A673 (cell line): ENCODE measurements at regions of chr9 and their contacts with region 1.

Region 1: DNA sequence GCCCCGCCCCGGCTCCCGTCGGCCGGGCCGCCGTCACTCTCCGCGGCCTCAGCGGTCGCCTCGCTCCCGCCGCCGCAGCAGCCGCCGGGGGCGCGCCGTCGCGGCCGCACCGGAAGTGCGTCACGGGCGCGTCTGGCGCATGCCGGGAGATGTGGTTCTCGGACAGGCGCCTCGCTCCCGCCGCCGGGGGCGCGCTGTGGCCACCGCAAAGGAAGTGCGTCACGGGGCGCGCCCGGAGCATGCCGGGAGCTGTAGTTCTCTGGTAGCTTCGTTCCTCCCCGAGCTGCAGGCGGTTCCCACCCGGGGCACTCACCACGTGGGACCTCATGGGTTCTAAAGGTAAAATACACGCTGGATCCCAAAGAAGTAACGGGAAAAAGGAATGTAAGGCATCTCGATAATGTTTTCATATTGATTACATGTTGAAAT is at the start of gene UBAC1:
- DNase-seq: peak; percentile 98
- H3K4me3 ChIP-seq: peak within 1 kb of the TSS; percentile 77
- H3K27ac ChIP-seq: peak within 1 kb of the TSS; percentile 85
- H3K4me1 ChIP-seq: peaks cover 19% of the 10 kb centered on the region
- H3K27me3 ChIP-seq: no peaks in the 10 kb centered on the region
- CTCF ChIP-seq: 0 out of 2 replicates have a peak, but pooled peaks have one; percentile 13
- total RNA-seq, gene UBAC1: 58.2 and 63.8 TPM in 2 replicates

Region 2: GRCh38 chr9:136225748-136226679 is 264.7 kb after region 1 on chr9:
- CTCF ChIA-PET with region 1: no interaction called
- POLR2A ChIA-PET with region 1: no interaction called
- intact Hi-C with region 1: loop called (anchors 10 kb)
- DNase-seq: peak; percentile 71
- H3K4me3 ChIP-seq: no peak overlapping the region
- H3K27ac ChIP-seq: peak overlapping the region; percentile 52
- H3K4me1 ChIP-seq: peaks cover 20% of the 10 kb centered on the region
- H3K27me3 ChIP-seq: no peaks in the 10 kb centered on the region
- CTCF ChIP-seq: peak; percentile 95

Region 3: DNA sequence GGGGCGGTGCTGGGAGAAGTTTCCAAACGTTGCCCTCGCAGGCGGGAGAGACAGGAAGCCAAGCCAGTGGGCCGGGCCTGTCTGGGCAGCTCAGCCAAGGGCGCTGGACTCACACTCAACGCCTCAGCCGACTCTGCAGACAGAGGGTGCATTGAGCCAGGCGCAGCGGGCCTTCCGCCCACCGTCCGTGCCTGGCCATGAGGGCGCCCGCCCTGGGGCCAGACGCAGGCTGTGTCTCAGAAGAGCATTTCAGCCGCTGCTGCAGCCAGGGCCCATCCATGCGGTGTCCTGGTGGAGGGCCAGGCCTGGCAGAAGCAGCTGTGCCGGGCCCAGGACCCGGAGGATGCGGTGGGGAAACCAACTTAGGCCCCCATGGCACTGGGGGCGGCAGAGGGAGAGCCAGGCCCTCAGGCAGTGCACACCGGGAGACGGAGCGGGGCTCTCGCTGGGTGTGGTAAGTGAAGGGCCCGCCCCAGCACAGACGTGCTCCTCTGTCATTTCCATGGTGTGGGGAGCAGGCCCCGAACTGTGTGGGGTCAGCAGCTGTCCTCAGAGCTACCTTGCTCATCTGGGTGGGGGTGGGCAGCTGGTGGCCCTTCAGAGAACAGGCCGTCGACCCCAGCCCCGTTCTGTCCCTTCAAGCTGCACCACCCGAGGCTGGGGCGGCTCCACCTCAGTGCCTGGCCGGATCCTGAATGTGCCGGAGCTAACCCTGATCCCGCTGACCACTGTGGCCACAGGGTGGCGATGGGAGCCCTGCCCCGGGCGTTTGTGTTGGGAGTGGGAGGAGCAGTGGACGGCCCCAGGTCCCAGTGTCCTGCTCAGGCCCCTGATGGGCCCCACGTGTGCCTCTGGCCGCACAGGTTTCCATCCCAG is 384.2 kb after region 1 on chr9:
- CTCF ChIA-PET with region 1: no interaction called
- POLR2A ChIA-PET with region 1: no interaction called
- intact Hi-C with region 1: no loop called
- DNase-seq: no peak
- H3K4me3 ChIP-seq: no peak overlapping the region
- H3K27ac ChIP-seq: no peak overlapping the region
- H3K4me1 ChIP-seq: peaks cover 12% of the 10 kb centered on the region
- H3K27me3 ChIP-seq: no peaks in the 10 kb centered on the region
- CTCF ChIP-seq: no peak